SK-N-SH (cell line): ENCODE measurements at regions of chr9 and their contacts with region 1.

Region 1: GRCh38 chr9:86626802-86627201 is 272.6 kb upstream of the TUT7 start:
- DNase-seq: no peak
- H3K4me3 ChIP-seq: no peak overlapping the region
- H3K27ac ChIP-seq: no peak overlapping the region
- H3K4me1 ChIP-seq: peaks cover 0 to 4% of the 10 kb centered on the region in 2 experiments; a peak in 2 of 4 replicates
- H3K27me3 ChIP-seq: no peaks in the 10 kb centered on the region
- CTCF ChIP-seq: 0 out of 2 replicates have a peak, but pooled peaks have one; percentile 8
- EP300 ChIP-seq: no peak
- RAD21 ChIP-seq: peak; percentile 22

Region 2: GRCh38 chr9:86637515-86637914 is 10.7 kb after region 1 on chr9:
- CTCF ChIA-PET with region 1: interaction called, 11 read pairs
- POLR2A ChIA-PET with region 1: no interaction called
- DNase-seq: peak; percentile 45
- H3K4me3 ChIP-seq: no peak overlapping the region; a peak in 1 of 4 replicates
- H3K27ac ChIP-seq: no peak overlapping the region
- H3K4me1 ChIP-seq: peaks cover 0 to 3% of the 10 kb centered on the region in 2 experiments; a peak in 2 of 4 replicates
- H3K27me3 ChIP-seq: no peaks in the 10 kb centered on the region
- CTCF ChIP-seq: peak; percentile 72
- EP300 ChIP-seq: no peak
- RAD21 ChIP-seq: peak; percentile 60